Motor neuron (in vitro differentiated cells): ENCODE measurements at regions of chr11 and their contacts with region 1.

Region 1: DNA sequence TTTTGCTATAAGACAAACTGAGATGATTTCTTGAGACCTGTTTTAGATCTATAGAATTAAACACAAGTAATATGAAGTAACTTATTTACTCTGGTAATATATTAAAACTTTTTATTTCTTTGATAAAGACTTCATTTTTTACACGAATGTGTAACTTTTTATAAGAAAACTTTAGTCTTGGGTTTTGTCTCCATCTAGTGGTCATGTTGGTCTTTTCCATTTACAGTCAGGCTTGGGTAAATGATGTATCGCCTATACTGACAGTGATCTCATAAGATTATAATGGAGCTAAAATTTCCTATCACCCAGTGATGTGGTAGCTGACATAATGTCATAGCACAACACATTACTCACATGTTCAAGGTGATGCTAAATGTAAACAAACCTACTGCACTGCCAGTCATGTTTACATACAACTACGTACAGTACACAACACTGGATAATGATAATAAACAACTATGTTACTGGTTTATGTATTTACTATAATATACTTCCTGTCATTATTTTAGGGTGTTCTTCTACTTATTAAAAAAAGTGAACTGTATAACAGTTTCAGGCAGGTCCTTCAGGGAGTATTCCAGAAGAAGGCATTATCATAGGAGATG is 7.5 kb upstream of the C11orf97 start:
- ATAC-seq: peak in 5 of 8 experiments; percentile 50 to 77 (median 65)
- H3K4me3 ChIP-seq: no peak overlapping the region
- H3K27ac ChIP-seq: no peak overlapping the region
- H3K4me1 ChIP-seq: no peaks in the 10 kb centered on the region

Region 2: DNA sequence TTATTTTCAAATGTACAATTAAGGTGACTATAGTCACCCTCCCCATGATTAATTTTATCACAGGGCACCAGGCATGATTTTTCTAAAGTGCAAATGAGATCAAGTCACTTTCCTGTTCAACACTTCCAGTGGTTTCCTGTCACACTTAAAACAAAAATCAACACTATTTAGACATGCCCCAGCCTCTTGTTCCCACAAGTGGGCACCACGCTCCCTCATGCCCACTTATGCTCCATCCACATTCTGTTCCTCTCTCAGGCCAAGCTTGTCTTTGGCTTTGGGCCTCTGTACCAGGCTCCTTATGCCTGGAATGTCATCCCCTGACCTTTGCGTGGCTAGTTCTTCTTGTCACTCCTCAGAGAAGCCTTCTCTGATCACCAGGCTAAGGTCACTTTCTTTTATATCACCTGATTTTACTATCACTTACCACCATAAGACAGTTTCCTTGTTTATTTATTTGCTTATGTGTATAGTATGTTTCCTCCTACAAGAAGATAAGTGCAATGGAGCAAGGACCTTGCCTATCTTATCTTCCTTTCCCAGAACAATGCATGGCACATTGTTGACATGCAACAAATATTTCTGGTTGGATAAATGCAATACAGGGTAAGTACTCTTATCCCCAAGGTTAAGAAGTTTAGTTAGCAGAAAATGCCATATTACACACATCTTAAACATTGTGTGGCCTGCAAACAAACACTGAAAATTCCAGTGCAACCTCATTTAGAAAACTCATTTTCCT is 427.1 kb before region 1 on chr11:
- in situ Hi-C with region 1: no loop called
- ATAC-seq: no peak
- H3K4me3 ChIP-seq: no peak overlapping the region
- H3K27ac ChIP-seq: no peak overlapping the region
- H3K4me1 ChIP-seq: no peaks in the 10 kb centered on the region

Region 3: GRCh38 chr11:94171693-94172440 is 332.9 kb before region 1 on chr11:
- in situ Hi-C with region 1: loop called in 2 of 9 experiments (anchors 10 to 25 kb)
- ATAC-seq: peak in 3 of 8 experiments; percentile 45 to 80 (median 51)
- H3K4me3 ChIP-seq: no peak overlapping the region
- H3K27ac ChIP-seq: no peak overlapping the region
- H3K4me1 ChIP-seq: no peaks in the 10 kb centered on the region

Region 4: GRCh38 chr11:94283678-94284077 is 221.1 kb before region 1 on chr11:
- in situ Hi-C with region 1: no loop called
- ATAC-seq: peak in 1 of 8 experiments; percentile 47
- H3K4me3 ChIP-seq: no peak overlapping the region
- H3K27ac ChIP-seq: no peak overlapping the region
- H3K4me1 ChIP-seq: no peaks in the 10 kb centered on the region

Region 5: GRCh38 chr11:94325681-94326080 is 179.1 kb before region 1 on chr11:
- in situ Hi-C with region 1: loop called in 1 of 9 experiments (anchors 10 kb)
- ATAC-seq: peak in 3 of 8 experiments; percentile 57 to 90 (median 83)
- H3K4me3 ChIP-seq: no peak overlapping the region
- H3K27ac ChIP-seq: no peak overlapping the region
- H3K4me1 ChIP-seq: no peaks in the 10 kb centered on the region

Region 6: DNA sequence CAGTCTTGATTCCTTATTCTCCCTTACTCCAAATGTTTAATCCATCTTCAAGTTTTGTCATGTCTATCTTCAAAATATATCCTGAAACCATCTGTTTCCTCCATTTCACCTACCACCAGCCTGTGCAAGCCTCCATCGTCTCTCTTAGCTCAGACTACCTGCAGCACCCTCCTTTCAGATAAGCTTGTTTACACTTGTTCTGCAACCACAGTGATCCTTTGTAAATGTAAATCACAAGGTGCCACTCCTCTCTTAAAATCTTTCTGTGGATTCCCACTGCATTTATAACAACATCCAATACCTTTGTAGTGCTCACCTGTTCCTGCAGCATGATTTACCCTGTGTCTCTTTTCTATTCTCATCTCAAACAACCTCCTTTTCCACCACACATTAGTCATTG is 71.7 kb before region 1 on chr11:
- in situ Hi-C with region 1: no loop called
- ATAC-seq: no peak
- H3K4me3 ChIP-seq: no peak overlapping the region
- H3K27ac ChIP-seq: no peak overlapping the region
- H3K4me1 ChIP-seq: no peaks in the 10 kb centered on the region